B cell (primary cell): ENCODE measurements at regions of chr7 and their contacts with region 1.

Region 1: DNA sequence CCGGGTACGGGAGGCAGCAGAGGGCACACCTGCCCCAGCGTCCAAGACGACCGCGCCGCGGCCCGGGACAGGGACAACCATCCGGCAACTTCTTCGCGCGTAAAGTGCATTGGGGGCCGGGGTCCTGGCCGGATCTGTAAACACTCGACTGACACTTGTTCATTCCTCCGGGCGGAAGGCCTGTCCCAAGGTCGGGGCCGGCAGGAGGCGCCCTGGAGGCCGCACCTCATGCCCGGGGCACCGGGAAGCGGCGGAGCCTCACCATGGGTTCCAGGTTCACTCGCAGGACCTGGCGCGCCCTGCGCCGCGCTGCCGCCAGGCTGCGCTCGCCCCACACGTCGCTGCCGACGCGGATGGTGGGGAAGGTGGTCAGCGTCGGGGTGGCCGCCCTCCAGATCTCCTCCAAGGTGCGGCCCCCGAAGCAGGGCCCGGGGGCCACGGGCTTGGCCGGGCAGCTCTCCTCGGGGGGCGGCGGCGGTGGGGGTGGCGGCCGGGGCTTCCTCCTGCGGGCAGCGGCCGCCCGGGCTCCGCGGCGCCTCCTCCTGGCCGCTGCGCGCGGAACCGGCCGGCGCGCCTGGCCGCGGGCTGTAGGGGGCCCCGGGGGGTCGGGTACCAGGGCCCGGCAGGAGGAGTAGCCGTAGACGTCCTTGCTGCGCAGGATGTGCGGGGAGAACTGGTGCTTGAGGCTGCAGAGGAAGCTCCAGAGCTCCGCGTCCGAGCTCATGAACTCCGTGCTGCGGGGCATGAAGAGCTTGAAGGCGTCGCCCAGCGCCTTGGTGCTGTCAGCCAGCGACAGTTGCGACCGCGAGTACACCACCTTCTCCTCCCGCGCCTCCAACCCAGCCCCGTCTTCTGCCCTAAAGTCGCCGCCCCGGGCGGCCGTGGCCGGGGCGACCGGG is 746 bp downstream of the CCDC71L start:
- DNase-seq: peak; percentile 91
- ATAC-seq: peak; percentile 47
- H3K4me3 ChIP-seq: peak overlapping the region; percentile 63 to 89 (median 79)
- H3K4me3 Mint-ChIP-seq: peak overlapping the region; percentile 87
- H3K27ac ChIP-seq: peak overlapping the region; percentile 75 to 80
- H3K27ac Mint-ChIP-seq: peak overlapping the region; percentile 91
- H3K4me1 ChIP-seq: peaks cover 23 to 24% of the 10 kb centered on the region in 2 donors
- H3K4me1 Mint-ChIP-seq: peaks cover 34% of the 10 kb centered on the region
- H3K27me3 ChIP-seq: no peaks in the 10 kb centered on the region
- H3K27me3 Mint-ChIP-seq: no peaks in the 10 kb centered on the region
- CTCF ChIP-seq: peak; percentile 81

Region 2: DNA sequence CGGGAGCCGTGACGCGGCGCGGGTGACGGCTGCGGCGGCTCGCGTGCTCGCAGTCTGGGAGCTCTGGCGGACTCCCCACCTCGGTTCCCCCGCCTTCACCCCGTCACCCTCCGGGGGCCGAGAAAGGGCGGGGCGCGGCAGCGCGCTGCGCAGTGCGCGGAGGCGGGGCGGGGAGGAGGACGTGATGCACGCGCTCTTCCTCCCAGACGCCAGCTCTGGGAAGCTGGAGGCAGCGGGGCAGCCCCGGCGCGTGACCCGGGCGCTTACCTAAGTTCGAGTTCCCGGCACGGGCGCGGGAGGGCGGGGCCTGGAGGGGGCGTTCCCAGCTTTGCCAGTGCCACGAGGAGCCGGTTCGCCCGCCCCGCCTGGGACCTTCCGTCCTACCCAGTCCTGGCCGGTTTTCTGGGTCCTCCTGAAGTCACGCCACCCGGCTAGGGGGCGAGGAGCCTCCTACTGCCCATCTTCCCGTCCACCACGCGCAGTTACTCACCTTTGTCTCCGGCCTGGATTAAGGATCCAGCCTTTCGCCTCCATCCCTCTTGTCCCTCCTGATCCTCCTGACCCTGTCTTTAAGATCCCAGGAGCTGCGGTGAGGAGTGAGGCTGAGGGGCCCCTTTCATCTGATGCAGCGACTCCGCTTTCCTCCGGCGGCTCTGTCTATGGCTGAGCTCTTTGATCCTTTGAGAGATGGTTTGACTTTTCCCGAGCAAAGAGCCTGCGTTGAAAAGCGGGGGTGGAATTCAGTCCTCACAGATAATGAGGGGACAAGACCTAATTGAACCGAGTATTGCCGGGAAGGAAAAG is 375.0 kb before region 1 on chr7:
- CTCF ChIA-PET with region 1: no interaction called
- POLR2A ChIA-PET with region 1: no interaction called
- intact Hi-C with region 1: loop called (anchors 2 kb)
- DNase-seq: peak; percentile 100
- ATAC-seq: peak; percentile 87
- H3K4me3 ChIP-seq: peak overlapping the region; percentile 79 to 100 (median 89)
- H3K4me3 Mint-ChIP-seq: peak overlapping the region; percentile 97
- H3K27ac ChIP-seq: peak overlapping the region; percentile 84 to 87
- H3K27ac Mint-ChIP-seq: peak overlapping the region; percentile 98
- H3K4me1 ChIP-seq: peaks cover 10 to 20% of the 10 kb centered on the region in 2 donors
- H3K4me1 Mint-ChIP-seq: peaks cover 31% of the 10 kb centered on the region
- H3K27me3 ChIP-seq: no peaks in the 10 kb centered on the region
- H3K27me3 Mint-ChIP-seq: no peaks in the 10 kb centered on the region
- CTCF ChIP-seq: no peak

Region 3: GRCh38 chr7:106598663-106599342 is 61.4 kb before region 1 on chr7:
- CTCF ChIA-PET with region 1: interaction called, 9 read pairs
- POLR2A ChIA-PET with region 1: no interaction called
- intact Hi-C with region 1: loop called (anchors 1 kb)
- DNase-seq: peak; percentile 87
- ATAC-seq: peak; percentile 99
- H3K4me3 ChIP-seq: peak overlapping the region in 1 of 5 experiments; percentile 41
- H3K4me3 Mint-ChIP-seq: peak overlapping the region; percentile 72
- H3K27ac ChIP-seq: no peak overlapping the region
- H3K27ac Mint-ChIP-seq: peak overlapping the region; percentile 69
- H3K4me1 ChIP-seq: peaks cover 0 to 7% of the 10 kb centered on the region in 2 donors
- H3K4me1 Mint-ChIP-seq: peaks cover 6% of the 10 kb centered on the region
- H3K27me3 ChIP-seq: no peaks in the 10 kb centered on the region
- H3K27me3 Mint-ChIP-seq: no peaks in the 10 kb centered on the region
- CTCF ChIP-seq: no peak

Region 4: DNA sequence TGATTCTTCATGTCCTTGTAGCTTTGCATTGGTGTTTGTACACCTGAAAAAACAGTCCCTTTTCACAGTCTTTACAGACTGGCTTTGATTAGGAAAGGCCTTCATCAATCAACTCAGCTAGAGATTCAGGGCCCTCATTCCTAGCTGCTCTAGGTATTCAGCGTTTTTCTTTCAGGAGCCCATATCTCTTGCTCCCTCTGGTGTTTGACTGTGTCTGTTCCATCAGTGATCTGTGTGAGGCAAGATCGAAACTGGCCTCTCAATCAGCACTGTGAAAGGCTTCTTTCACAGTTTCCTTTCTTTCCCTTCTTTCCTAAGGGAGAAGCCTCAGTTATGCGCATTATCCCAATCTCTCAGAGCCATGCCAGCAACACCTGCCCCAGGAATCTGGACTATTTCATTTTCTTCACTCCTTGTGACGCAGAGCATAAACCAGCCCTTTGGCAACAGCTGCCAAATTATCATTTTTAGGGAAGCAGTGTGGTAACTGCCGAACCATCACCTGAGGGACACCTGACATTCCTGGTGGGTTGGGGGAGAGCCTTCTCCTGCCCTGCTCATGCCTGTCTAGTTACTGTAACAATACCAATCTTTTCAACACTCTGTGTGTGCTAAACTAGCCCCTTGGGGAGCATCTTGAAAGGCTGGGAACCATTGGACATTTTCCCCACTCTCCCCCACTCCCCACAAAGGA is 76.4 kb after region 1 on chr7:
- CTCF ChIA-PET with region 1: interaction called, 290 read pairs
- POLR2A ChIA-PET with region 1: interaction called, 25 read pairs
- intact Hi-C with region 1: loop called (anchors 1 kb)
- DNase-seq: peak; percentile 84
- ATAC-seq: peak; percentile 96
- H3K4me3 ChIP-seq: peak overlapping the region in 2 of 5 experiments; percentile 18 to 19
- H3K4me3 Mint-ChIP-seq: peak overlapping the region; percentile 66
- H3K27ac ChIP-seq: peak overlapping the region; percentile 22 to 66
- H3K27ac Mint-ChIP-seq: peak overlapping the region; percentile 87
- H3K4me1 ChIP-seq: peaks cover 16 to 17% of the 10 kb centered on the region in 2 donors
- H3K4me1 Mint-ChIP-seq: peaks cover 17% of the 10 kb centered on the region
- H3K27me3 ChIP-seq: no peaks in the 10 kb centered on the region
- H3K27me3 Mint-ChIP-seq: no peaks in the 10 kb centered on the region
- CTCF ChIP-seq: peak; percentile 79

Region 5: DNA sequence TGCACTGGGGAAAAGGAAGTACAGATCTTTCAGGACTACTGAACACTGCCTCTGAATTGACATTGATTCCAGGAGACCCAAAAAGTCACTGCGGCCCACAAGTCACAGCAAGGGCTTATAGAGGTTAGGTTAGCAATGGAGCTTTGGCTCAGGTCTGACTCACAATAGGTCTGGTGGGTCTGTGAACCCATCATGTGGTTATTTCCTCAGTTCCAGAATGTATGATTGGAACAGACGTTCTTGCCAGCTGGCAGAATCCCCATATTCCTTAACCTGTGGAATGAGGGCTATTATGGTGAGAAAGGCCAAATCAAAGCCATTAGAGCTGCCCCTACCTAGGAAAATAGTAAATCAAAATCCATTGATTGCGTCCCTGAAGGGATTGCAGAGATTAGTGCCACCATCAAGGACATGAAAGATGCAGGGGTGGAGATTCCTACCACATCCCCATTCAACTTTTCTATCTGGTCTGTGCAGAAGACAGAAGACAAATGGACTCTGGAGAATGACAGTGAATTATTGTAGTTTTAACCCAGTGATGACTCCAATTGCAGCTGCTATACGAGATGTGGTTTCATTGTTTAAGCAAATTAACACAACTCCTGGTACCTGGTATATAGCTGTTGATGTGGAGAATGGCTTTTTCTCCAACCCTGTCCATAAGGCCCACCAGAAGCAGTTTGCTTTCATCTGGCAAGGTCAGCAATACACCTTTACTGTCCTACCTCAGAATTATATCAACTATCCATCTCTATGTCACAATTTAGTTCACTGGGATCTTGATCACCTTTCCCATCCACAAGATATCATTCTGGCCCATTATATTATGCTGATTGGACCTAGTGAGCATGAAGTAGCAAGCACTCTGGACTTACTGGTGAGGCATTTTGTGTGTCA is 160.4 kb after region 1 on chr7:
- CTCF ChIA-PET with region 1: no interaction called
- POLR2A ChIA-PET with region 1: no interaction called
- intact Hi-C with region 1: no loop called
- DNase-seq: no peak
- ATAC-seq: no peak
- H3K4me3 ChIP-seq: no peak overlapping the region
- H3K4me3 Mint-ChIP-seq: no peak overlapping the region
- H3K27ac ChIP-seq: no peak overlapping the region
- H3K27ac Mint-ChIP-seq: no peak overlapping the region
- H3K4me1 ChIP-seq: no peaks in the 10 kb centered on the region
- H3K4me1 Mint-ChIP-seq: peaks cover 3% of the 10 kb centered on the region
- H3K27me3 ChIP-seq: no peaks in the 10 kb centered on the region
- H3K27me3 Mint-ChIP-seq: no peaks in the 10 kb centered on the region
- CTCF ChIP-seq: no peak

Region 6: DNA sequence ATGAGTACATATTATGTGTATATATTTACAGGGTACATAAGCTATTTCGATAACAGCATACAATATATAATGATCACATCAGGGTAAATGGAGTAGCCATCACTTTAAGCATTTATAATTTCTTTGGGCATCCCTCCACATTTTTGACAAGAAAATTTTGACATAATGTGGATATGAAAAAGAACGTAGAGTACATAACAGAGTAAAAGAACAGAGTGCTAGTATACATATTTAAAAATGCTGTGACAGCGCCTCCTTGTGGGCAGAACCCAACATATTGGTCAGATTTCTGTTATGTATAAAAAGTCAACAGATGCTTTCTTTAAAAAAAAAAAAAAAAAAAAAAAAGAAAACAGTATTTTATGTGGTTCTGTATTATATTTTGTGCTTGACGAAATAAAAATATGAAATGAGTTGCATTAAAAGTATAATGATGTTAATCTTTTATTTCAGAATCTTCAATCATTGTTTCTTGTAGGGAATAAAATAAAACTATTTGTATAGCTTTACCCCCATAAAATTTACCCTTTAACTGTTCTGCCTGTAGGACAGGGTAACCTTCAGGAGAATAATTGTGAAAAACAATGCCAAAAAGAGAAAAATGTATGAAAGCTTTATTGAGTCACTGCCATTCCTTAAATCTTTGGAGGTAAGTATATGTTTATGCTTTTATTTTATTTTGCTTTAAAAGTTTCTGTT is 490.3 kb after region 1 on chr7:
- CTCF ChIA-PET with region 1: interaction called, 3 read pairs
- POLR2A ChIA-PET with region 1: no interaction called
- intact Hi-C with region 1: loop called (anchors 5 kb)
- DNase-seq: peak; percentile 83
- ATAC-seq: peak; percentile 79
- H3K4me3 ChIP-seq: no peak overlapping the region
- H3K4me3 Mint-ChIP-seq: no peak overlapping the region
- H3K27ac ChIP-seq: no peak overlapping the region
- H3K27ac Mint-ChIP-seq: no peak overlapping the region
- H3K4me1 ChIP-seq: no peaks in the 10 kb centered on the region
- H3K4me1 Mint-ChIP-seq: peaks cover 4% of the 10 kb centered on the region
- H3K27me3 ChIP-seq: no peaks in the 10 kb centered on the region
- H3K27me3 Mint-ChIP-seq: no peaks in the 10 kb centered on the region
- CTCF ChIP-seq: peak; percentile 86